ENCODE measurements at regions of chr2 and their contacts with region 1.

Region 1: GRCh38 chr2:16196687-16197503 is 256.5 kb downstream of the MYCN start:
- DNase-seq: no peak
- H3K4me3 ChIP-seq: no peak overlapping the region
- H3K27ac ChIP-seq: no peak overlapping the region
- H3K4me1 ChIP-seq: no peaks in the 10 kb centered on the region
- H3K27me3 ChIP-seq: no peaks in the 10 kb centered on the region
- CTCF ChIP-seq: no peak
- EP300 ChIP-seq: no peak
- POLR2A ChIP-seq: no peak

Region 2: DNA sequence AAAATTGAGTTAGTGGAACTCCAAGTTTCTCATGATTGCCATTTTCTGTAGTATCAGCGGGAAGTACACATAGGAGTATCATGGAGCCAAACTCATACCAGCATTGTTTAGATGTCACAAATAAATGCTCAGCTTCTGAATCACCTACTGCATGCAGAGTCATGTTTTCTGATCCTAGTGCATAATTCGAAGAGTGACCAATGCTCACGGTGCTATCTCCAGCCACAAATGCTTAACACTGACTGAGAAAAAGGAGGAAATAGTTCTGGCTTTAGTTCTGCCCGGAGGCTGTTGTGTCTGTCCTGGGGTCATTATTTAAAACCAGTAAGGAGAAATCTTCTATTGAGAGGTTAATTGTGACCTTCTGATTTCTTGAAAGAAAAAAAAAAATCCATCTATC is 1609.8 kb before region 1 on chr2:
- intact Hi-C with region 1: loop called in 1 of 4 experiments (anchors 5 kb)
- DNase-seq: no peak
- H3K4me3 ChIP-seq: no peak overlapping the region
- H3K27ac ChIP-seq: no peak overlapping the region
- H3K4me1 ChIP-seq: no peaks in the 10 kb centered on the region
- H3K27me3 ChIP-seq: no peaks in the 10 kb centered on the region
- CTCF ChIP-seq: no peak
- EP300 ChIP-seq: no peak
- POLR2A ChIP-seq: no peak

Region 3: GRCh38 chr2:16021611-16022363 is 175.1 kb before region 1 on chr2:
- intact Hi-C with region 1: no loop called
- DNase-seq: no peak
- H3K4me3 ChIP-seq: no peak overlapping the region
- H3K27ac ChIP-seq: no peak overlapping the region
- H3K4me1 ChIP-seq: no peaks in the 10 kb centered on the region
- H3K27me3 ChIP-seq: no peaks in the 10 kb centered on the region
- CTCF ChIP-seq: no peak
- EP300 ChIP-seq: no peak
- POLR2A ChIP-seq: no peak

Measured in ovary (tissue), 10 donors.